K562 (cell line): ENCODE measurements at regions of chr17 and their contacts with region 1.

Region 1: DNA sequence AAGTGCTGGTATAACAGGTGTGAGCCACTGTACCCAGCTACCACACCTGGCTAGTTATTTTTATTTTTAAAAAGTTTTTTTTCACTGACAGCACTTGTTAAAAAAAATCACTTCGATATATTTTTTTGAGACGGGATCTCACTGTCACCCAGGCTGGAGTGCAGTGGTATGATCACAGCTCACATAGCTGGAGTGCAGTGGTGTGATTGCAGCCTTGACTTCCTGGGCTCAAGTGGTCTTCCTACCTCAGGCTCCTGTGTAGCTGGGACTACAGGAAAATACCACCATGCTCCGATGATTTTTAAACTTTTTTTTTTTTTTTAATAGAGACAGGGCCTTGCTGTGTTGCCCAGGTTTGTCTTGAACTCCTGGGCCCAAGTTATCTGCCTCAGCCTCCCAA is 12.9 kb downstream of the NBR1 start:
- DNase-seq: no peak
- ATAC-seq: no peak
- H3K4me3 ChIP-seq: no peak overlapping the region
- H3K27ac ChIP-seq: no peak overlapping the region
- H3K4me1 ChIP-seq: no peaks in the 10 kb centered on the region; a peak in 1 of 5 replicates
- H3K27me3 ChIP-seq: no peaks in the 10 kb centered on the region
- CTCF ChIP-seq: no peak
- EP300 ChIP-seq: no peak
- POLR2A ChIP-seq: no peak
- RAD21 ChIP-seq: no peak

Region 2: GRCh38 chr17:43140396-43141332 is 43.3 kb before region 1 on chr17:
- CTCF ChIA-PET with region 1: no interaction called
- POLR2A ChIA-PET with region 1: no interaction called
- in situ Hi-C with region 1: no loop called
- intact Hi-C with region 1: no loop called
- DNase-seq: no peak
- ATAC-seq: no peak
- H3K4me3 ChIP-seq: no peak overlapping the region
- H3K27ac ChIP-seq: no peak overlapping the region
- H3K4me1 ChIP-seq: no peaks in the 10 kb centered on the region; a peak in 2 of 5 replicates
- H3K27me3 ChIP-seq: no peaks in the 10 kb centered on the region
- CTCF ChIP-seq: no peak
- EP300 ChIP-seq: no peak
- POLR2A ChIP-seq: no peak
- RAD21 ChIP-seq: no peak

Region 3: GRCh38 chr17:43170766-43171585 is 12.9 kb before region 1 on chr17 and contains the start of gene NBR1:
- CTCF ChIA-PET with region 1: no interaction called
- POLR2A ChIA-PET with region 1: interaction called, 12 read pairs
- in situ Hi-C with region 1: no loop called
- intact Hi-C with region 1: no loop called
- DNase-seq: peak; percentile 92 to 99 (median 96)
- ATAC-seq: peak; percentile 92
- H3K4me3 ChIP-seq: peak within 1 kb of the TSS; percentile 84
- H3K27ac ChIP-seq: peak within 1 kb of the TSS; percentile 92
- H3K4me1 ChIP-seq: peaks cover 3 to 8% of the 10 kb centered on the region in 2 experiments; a peak in 3 of 5 replicates
- H3K27me3 ChIP-seq: no peaks in the 10 kb centered on the region
- CTCF ChIP-seq: peak; percentile 53 to 71 (median 64); a peak in 5 of 6 replicates
- EP300 ChIP-seq: peak; percentile 58
- POLR2A ChIP-seq: peak; percentile 85
- RAD21 ChIP-seq: peak in 1 of 2 experiments; percentile 35; a peak in 2 of 4 replicates
- polyA plus RNA-seq, gene NBR1: 4.2 to 7.5 TPM

Region 4: DNA sequence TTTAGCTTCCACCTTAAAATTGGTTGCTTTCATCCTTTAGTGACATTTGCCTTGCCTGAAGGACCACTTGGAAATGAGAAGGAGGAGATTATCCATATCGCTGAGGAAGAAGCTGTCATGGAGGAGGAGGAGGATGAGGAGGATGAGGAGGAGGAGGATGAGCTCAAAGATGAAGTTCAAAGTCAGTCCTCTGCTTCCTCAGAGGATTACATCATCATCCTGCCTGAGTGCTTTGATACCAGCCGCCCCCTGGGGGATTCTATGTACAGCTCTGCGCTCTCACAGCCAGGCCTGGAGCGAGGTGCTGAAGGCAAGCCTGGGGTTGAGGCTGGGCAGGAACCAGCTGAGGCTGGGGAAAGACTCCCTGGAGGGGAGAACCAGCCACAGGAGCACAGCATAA is 16.2 kb after region 1 on chr17:
- CTCF ChIA-PET with region 1: no interaction called
- POLR2A ChIA-PET with region 1: interaction called, 10 read pairs
- in situ Hi-C with region 1: no loop called
- intact Hi-C with region 1: no loop called
- DNase-seq: peak in 1 of 4 experiments; percentile 11
- ATAC-seq: peak; percentile 83
- H3K4me3 ChIP-seq: no peak overlapping the region
- H3K27ac ChIP-seq: no peak overlapping the region
- H3K4me1 ChIP-seq: no peaks in the 10 kb centered on the region
- H3K27me3 ChIP-seq: no peaks in the 10 kb centered on the region
- CTCF ChIP-seq: no peak; a peak in 1 of 6 replicates
- EP300 ChIP-seq: no peak
- POLR2A ChIP-seq: no peak
- RAD21 ChIP-seq: no peak